Lower leg skin (tissue), 4 donors: ENCODE measurements at regions of chr2 and their contacts with region 1.

Region 1: GRCh38 chr2:30259827-30260679 is 28.7 kb downstream of the LBH start:
- DNase-seq: no peak
- H3K4me3 ChIP-seq: no peak overlapping the region
- CTCF ChIP-seq: no peak
- POLR2A ChIP-seq: no peak

Region 2: DNA sequence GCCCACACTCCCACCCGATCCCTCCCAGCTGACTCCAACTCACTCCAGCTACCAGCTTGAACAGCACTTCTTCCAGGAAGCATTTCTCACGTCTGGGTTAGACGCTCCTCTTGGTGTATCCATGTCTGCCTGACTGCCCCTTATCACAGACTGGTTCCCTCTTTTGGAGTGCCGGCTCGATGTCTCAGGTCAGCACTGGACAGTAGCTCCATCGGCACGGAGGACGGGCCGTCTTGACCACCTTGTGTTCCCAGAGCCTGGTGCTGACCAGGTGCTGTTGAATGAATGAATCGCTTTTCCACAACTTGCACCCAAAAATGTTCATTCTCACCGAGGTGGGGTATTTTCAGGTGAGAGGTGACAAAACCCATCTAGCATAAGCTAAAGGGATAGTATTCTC is 43.0 kb after region 1 on chr2:
- intact Hi-C with region 1: loop called (anchors 1 kb)
- DNase-seq: no peak
- H3K4me3 ChIP-seq: no peak overlapping the region
- CTCF ChIP-seq: no peak
- POLR2A ChIP-seq: no peak